Gastrocnemius medialis (tissue), 4 donors: ENCODE measurements at regions of chr17 and their contacts with region 1.

Region 1: GRCh38 chr17:13002766-13003451 is 14.9 kb downstream of the ELAC2 start:
- DNase-seq: peak in 1 of 2 donors; percentile 61
- ATAC-seq: peak; percentile 70 to 84
- H3K4me3 ChIP-seq: no peak overlapping the region
- H3K27ac ChIP-seq: peak overlapping the region in 1 of 4 donors; percentile 57
- H3K4me1 ChIP-seq: peaks cover 0 to 6% of the 10 kb centered on the region in 2 donors
- H3K27me3 ChIP-seq: no peaks in the 10 kb centered on the region
- CTCF ChIP-seq: peak; percentile 53 to 87 (median 70)
- POLR2A ChIP-seq: no peak

Region 2: GRCh38 chr17:12256380-12256995 is 746.4 kb before region 1 on chr17:
- in situ Hi-C with region 1: loop called in 2 of 4 experiments (anchors 10 kb)
- intact Hi-C with region 1: no loop called
- DNase-seq: no peak
- ATAC-seq: no peak
- H3K4me3 ChIP-seq: no peak overlapping the region
- H3K27ac ChIP-seq: no peak overlapping the region
- H3K4me1 ChIP-seq: no peaks in the 10 kb centered on the region
- H3K27me3 ChIP-seq: peaks cover 0 to 2% (median 0%) of the 10 kb centered on the region in 3 donors
- CTCF ChIP-seq: peak in 3 of 5 experiments; percentile 10 to 57 (median 44)
- POLR2A ChIP-seq: no peak

Region 3: DNA sequence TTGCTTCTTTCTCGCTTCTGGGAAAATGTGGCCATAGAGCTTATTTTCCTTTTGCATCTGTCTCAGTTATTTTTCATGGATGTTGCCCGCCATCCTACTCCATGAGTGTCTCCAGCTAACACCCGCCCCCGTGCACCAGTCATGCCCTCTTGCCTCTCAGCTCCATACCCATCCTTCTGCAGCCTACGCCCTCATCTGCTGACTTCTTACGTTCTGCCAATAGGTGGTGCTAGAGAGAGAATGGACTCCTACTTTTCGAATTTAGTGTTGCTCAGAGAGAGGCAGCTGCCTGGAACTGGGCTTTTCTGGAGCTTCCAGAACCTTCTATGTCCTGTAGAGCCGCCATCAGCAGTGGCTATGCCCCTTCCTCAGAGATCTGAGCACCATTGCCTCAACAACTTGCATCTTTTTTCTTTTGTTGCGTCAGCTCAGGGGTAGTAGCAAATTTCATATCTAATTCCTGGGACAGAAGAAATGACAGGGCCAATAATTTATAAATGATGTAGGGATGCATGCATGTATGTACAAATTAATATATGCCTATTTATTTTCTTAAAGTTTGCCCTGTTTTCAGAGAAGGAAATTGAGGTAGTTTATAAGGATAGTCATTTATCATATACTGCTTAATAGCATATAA is 456.9 kb before region 1 on chr17:
- in situ Hi-C with region 1: loop called in 1 of 4 experiments (anchors 25 kb)
- intact Hi-C with region 1: loop called (anchors 5 kb)
- DNase-seq: no peak
- ATAC-seq: no peak
- H3K4me3 ChIP-seq: no peak overlapping the region
- H3K27ac ChIP-seq: no peak overlapping the region
- H3K4me1 ChIP-seq: no peaks in the 10 kb centered on the region
- H3K27me3 ChIP-seq: no peaks in the 10 kb centered on the region
- CTCF ChIP-seq: peak in 3 of 5 experiments; percentile 26 to 55 (median 45)
- POLR2A ChIP-seq: no peak

Region 4: GRCh38 chr17:12859520-12859919 is 143.4 kb before region 1 on chr17:
- in situ Hi-C with region 1: no loop called
- intact Hi-C with region 1: no loop called
- DNase-seq: no peak
- ATAC-seq: peak in 1 of 2 donors; percentile 68
- H3K4me3 ChIP-seq: no peak overlapping the region
- H3K27ac ChIP-seq: peak overlapping the region in 1 of 4 donors; percentile 29
- H3K4me1 ChIP-seq: no peaks in the 10 kb centered on the region
- H3K27me3 ChIP-seq: no peaks in the 10 kb centered on the region
- CTCF ChIP-seq: no peak
- POLR2A ChIP-seq: no peak

Region 5: GRCh38 chr17:12928741-12929140 is 74.2 kb before region 1 on chr17:
- in situ Hi-C with region 1: no loop called
- intact Hi-C with region 1: loop called (anchors 5 kb)
- DNase-seq: no peak
- ATAC-seq: no peak
- H3K4me3 ChIP-seq: no peak overlapping the region
- H3K27ac ChIP-seq: no peak overlapping the region
- H3K4me1 ChIP-seq: peaks cover 0 to 2% of the 10 kb centered on the region in 2 donors
- H3K27me3 ChIP-seq: no peaks in the 10 kb centered on the region
- CTCF ChIP-seq: no peak
- POLR2A ChIP-seq: no peak